ENCODE measurements at regions of chr21 and their contacts with region 1.

Region 1: GRCh38 chr21:33266050-33266788 is at the start of gene IL10RB:
- DNase-seq: peak; percentile 71
- ATAC-seq: peak; percentile 74
- H3K4me3 Mint-ChIP-seq: peak within 1 kb of the TSS; percentile 92
- H3K27ac Mint-ChIP-seq: peak within 1 kb of the TSS; percentile 95
- H3K4me1 Mint-ChIP-seq: peaks cover 66% of the 10 kb centered on the region
- H3K27me3 Mint-ChIP-seq: no peaks in the 10 kb centered on the region
- CTCF ChIP-seq: no peak
- total RNA-seq, gene IL10RB: 36.7 and 37.9 TPM in 2 replicates

Region 2: DNA sequence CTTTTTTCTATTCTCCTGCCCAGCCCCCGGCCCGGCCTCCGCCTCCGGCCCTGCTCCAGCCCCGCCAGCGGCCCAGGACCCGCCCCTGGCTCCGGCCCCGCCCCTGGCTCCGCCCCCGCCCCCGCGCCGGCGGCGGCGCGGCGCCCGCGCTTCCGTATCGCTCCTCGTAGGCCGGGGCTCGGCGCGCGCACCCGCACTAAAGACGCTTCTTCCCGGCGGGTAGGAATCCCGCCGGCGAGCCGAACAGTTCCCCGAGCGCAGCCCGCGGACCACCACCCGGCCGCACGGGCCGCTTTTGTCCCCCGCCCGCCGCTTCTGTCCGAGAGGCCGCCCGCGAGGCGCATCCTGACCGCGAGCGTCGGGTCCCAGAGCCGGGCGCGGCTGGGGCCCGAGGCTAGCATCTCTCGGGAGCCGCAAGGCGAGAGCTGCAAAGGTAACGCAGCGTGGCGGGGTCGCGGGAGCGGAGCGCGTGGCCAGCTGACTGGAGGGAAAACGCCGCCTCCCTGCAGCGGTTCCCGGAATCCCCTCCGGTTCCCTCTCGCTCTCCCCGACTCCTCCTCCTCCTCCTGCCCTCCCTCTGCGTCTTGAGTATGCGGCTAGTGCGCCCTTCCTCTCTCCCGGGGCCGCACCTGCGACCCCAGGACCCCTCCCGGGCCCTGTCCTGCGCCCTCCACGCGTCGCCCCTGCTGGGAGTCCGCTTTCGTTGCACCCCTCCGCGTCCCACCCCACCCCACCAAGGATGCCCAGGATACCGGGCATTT is 36.3 kb before region 1 on chr21 and contains the start of gene IFNAR2:
- CTCF ChIA-PET with region 1: interaction called, 3 read pairs
- POLR2A ChIA-PET with region 1: interaction called, 45 read pairs
- intact Hi-C with region 1: loop called (anchors 1 kb)
- DNase-seq: peak; percentile 77
- ATAC-seq: peak; percentile 88
- H3K4me3 Mint-ChIP-seq: peak within 1 kb of the TSS; percentile 92
- H3K27ac Mint-ChIP-seq: peak within 1 kb of the TSS; percentile 86
- H3K4me1 Mint-ChIP-seq: peaks cover 47% of the 10 kb centered on the region
- H3K27me3 Mint-ChIP-seq: no peaks in the 10 kb centered on the region
- CTCF ChIP-seq: no peak
- total RNA-seq, gene IFNAR2: 24.9 and 29.2 TPM in 2 replicates

Region 3: DNA sequence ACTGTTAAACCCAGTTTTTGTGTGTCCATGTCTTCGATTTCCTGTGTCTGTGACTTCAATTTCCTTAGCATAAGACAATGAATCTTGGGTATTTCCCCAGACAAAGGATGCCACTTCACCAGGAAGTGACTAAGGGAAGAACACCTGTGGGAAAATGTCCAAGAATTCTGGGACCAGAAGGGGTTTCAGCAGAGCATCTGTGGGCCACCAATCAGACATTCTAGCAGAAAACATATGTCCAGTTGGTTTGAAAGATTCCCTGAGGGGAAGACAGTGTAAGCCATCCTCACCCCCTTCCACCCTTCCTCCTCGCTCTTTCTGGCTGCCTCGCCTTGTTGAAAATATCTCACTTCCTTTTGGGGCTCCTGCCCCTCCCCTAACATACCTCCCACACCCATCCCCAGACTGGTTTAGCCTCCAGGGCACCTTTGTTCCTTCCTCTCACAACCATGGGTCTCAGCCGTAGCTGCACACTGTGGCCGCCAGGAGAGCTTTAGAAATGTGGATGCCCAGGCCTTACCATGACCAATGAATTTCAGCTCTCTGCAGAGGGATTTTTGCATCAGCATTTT is 33.0 kb after region 1 on chr21:
- CTCF ChIA-PET with region 1: interaction called, 5 read pairs
- POLR2A ChIA-PET with region 1: interaction called, 37 read pairs
- intact Hi-C with region 1: loop called (anchors 2 kb)
- DNase-seq: peak; percentile 26
- ATAC-seq: peak; percentile 80
- H3K4me3 Mint-ChIP-seq: peak overlapping the region; percentile 59
- H3K27ac Mint-ChIP-seq: peak overlapping the region; percentile 80
- H3K4me1 Mint-ChIP-seq: peaks cover 82% of the 10 kb centered on the region
- H3K27me3 Mint-ChIP-seq: no peaks in the 10 kb centered on the region
- CTCF ChIP-seq: no peak

Region 4: GRCh38 chr21:33403779-33404585 is 137.8 kb after region 1 on chr21:
- CTCF ChIA-PET with region 1: no interaction called
- POLR2A ChIA-PET with region 1: interaction called, 3 read pairs
- intact Hi-C with region 1: loop called (anchors 1 kb)
- DNase-seq: peak; percentile 39
- ATAC-seq: peak; percentile 43
- H3K4me3 Mint-ChIP-seq: peak overlapping the region; percentile 95
- H3K27ac Mint-ChIP-seq: peak overlapping the region; percentile 94
- H3K4me1 Mint-ChIP-seq: peaks cover 80% of the 10 kb centered on the region
- H3K27me3 Mint-ChIP-seq: no peaks in the 10 kb centered on the region
- CTCF ChIP-seq: no peak

Region 5: DNA sequence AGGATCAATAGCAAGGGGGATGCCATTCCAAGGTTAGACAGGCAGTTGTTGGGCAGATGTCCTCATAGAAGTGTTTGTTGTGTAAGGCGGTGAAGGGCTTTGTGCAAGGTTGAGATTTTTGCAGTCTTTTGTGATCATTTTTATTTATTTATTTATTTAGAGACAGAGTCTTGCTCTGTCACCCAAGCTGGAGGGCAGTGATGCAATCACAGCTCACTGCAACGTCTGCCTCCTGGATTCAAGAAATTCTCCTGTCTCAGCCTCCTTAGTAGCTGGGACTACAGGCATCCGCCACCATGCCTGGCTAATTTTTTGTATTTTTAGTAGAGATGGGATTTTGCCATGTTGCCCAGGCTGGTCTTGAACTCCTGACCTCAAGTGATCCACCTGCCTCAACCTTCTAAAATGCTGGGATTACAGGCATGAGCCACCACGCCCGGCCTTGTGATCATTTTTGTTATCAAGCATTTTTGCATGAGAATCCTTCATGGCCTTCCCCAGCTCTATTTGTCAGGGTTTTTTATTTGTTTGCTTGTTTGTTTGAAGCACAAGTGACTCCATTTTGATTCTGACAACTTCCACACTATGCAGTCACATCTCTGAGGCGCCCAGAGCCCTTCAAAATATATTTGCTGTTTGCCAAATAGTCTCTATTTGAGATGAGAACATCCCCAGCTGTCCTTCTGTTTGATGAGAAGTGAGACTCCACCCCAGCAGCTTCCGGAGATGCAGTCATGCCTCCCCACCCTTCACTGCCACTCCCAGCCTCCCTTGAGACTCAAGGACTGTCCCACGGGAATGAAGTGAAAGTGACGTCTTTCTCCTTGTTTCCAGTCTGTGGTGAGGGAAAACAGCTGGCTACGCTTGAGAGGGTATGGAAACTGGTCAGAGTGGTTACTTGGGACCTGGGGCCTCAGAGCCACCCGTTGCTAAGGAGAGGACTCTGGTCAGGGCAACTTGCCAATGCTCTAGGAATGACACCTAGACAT is 175.6 kb after region 1 on chr21:
- CTCF ChIA-PET with region 1: interaction called, 16 read pairs
- POLR2A ChIA-PET with region 1: interaction called, 13 read pairs
- intact Hi-C with region 1: loop called (anchors 1 kb)
- DNase-seq: peak; percentile 61
- ATAC-seq: peak; percentile 92
- H3K4me3 Mint-ChIP-seq: peak overlapping the region; percentile 58
- H3K27ac Mint-ChIP-seq: peak overlapping the region; percentile 92
- H3K4me1 Mint-ChIP-seq: peaks cover 73% of the 10 kb centered on the region
- H3K27me3 Mint-ChIP-seq: no peaks in the 10 kb centered on the region
- CTCF ChIP-seq: no peak

Region 6: GRCh38 chr21:33712022-33712803 is 446.0 kb after region 1 on chr21:
- CTCF ChIA-PET with region 1: no interaction called
- POLR2A ChIA-PET with region 1: no interaction called
- intact Hi-C with region 1: no loop called
- DNase-seq: no peak
- ATAC-seq: no peak
- H3K4me3 Mint-ChIP-seq: no peak overlapping the region
- H3K27ac Mint-ChIP-seq: no peak overlapping the region
- H3K4me1 Mint-ChIP-seq: no peaks in the 10 kb centered on the region
- H3K27me3 Mint-ChIP-seq: peaks cover 5% of the 10 kb centered on the region
- CTCF ChIP-seq: no peak

Measured in activated B cell treated with CpG ODN at 0.5 μM for 24 hours (primary cell).